ENCODE measurements at regions of chr1 and their contacts with region 1.

Region 1: DNA sequence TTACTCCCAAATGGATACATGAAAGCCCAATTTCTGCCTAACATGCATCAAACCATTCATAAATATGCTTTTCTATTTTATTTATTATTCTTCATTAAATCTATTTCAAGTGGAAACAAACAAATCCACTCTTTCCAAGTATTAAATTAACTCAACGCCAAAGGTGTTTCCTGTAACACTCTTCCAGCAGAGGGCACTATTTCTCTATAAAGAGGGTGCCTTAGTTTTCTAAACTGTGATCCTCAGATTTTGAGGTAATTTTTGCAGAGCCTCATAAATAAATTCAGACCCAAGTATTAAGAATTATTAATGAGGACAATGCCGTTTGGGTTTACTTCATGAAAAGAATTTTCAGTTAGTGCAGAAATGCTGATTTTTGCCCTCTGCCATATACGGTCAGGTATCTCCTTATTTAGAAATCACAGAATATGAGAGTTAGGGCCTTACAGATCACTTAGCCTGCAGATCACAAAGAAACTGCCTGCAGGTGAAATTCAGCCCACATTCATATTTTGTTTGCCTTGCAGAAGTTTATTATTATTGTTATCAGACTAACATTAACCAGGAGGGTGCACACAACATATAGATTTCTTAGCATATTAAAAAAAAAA is 40.1 kb upstream of the MYSM1 start:
- DNase-seq: no peak
- ATAC-seq: peak in 1 of 2 donors; percentile 61
- H3K4me3 ChIP-seq: no peak overlapping the region
- H3K27ac ChIP-seq: no peak overlapping the region
- H3K4me1 ChIP-seq: no peaks in the 10 kb centered on the region
- H3K27me3 ChIP-seq: no peaks in the 10 kb centered on the region

Region 2: GRCh38 chr1:58584082-58584895 is 155.7 kb before region 1 on chr1:
- intact Hi-C with region 1: no loop called
- DNase-seq: peak; percentile 73 to 78 (median 76)
- ATAC-seq: peak; percentile 82 to 93
- H3K4me3 ChIP-seq: no peak overlapping the region
- H3K27ac ChIP-seq: no peak overlapping the region
- H3K4me1 ChIP-seq: peaks cover 4% of the 10 kb centered on the region
- H3K27me3 ChIP-seq: no peaks in the 10 kb centered on the region

Region 3: GRCh38 chr1:58773406-58773840 is 33.5 kb after region 1 on chr1:
- intact Hi-C with region 1: loop called in 1 of 4 experiments (anchors 2 kb)
- DNase-seq: peak; percentile 69 to 77 (median 73)
- ATAC-seq: peak; percentile 93 to 94
- H3K4me3 ChIP-seq: no peak overlapping the region
- H3K27ac ChIP-seq: no peak overlapping the region
- H3K4me1 ChIP-seq: peaks cover 2% of the 10 kb centered on the region
- H3K27me3 ChIP-seq: no peaks in the 10 kb centered on the region

Region 4: GRCh38 chr1:59699227-59699847 is 959.4 kb after region 1 on chr1:
- intact Hi-C with region 1: loop called in 2 of 4 experiments (anchors 5 to 10 kb)
- DNase-seq: no peak
- ATAC-seq: peak in 1 of 2 donors; percentile 44
- H3K4me3 ChIP-seq: no peak overlapping the region
- H3K27ac ChIP-seq: no peak overlapping the region
- H3K4me1 ChIP-seq: peaks cover 11% of the 10 kb centered on the region
- H3K27me3 ChIP-seq: no peaks in the 10 kb centered on the region

Region 5: GRCh38 chr1:59707178-59707791 is 967.3 kb after region 1 on chr1:
- intact Hi-C with region 1: loop called in 1 of 4 experiments (anchors 10 kb)
- DNase-seq: peak; percentile 66 to 81 (median 69)
- ATAC-seq: peak; percentile 91 to 93
- H3K4me3 ChIP-seq: no peak overlapping the region
- H3K27ac ChIP-seq: peak overlapping the region; percentile 69
- H3K4me1 ChIP-seq: peaks cover 13% of the 10 kb centered on the region
- H3K27me3 ChIP-seq: no peaks in the 10 kb centered on the region

Region 6: DNA sequence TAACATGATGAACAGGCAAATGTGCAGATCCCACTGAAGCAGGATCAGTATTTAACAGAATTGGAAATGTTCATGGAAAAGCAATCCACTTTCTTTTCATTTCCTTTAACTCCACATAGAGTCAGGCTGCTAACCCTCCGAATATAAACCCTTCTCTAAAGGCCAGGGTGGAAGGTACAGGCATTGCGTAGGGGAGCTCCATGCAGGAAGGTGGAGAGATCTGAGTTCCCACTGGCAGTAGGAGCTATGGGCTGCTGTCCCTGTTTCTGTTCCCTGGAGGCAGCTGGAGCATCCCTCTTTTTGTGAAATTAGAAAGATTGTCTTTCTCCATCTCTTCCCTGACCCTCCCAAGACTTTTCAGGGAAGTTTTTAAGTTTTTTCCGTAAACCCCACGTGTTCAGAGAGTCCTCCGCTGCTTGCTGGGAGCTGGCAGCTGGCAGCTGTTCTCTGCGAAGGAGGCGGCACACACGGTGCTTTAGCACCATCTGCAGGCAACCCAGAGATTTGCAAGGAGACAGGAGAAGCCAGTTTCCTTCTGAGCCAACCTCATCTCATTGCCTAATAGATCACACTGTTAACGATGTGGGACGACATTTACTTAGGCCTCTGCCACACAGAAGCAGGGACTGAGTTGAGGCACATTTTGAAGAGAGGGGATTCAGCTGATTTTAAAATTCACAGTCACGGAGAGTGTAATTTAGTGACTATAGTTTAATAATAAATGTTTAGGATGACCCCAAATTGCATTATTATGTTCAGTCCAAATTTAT is 1019.4 kb after region 1 on chr1:
- intact Hi-C with region 1: loop called in 2 of 4 experiments (anchors 10 kb)
- DNase-seq: peak; percentile 82 to 92 (median 90)
- ATAC-seq: peak; percentile 95 to 96
- H3K4me3 ChIP-seq: peak overlapping the region; percentile 51
- H3K27ac ChIP-seq: peak overlapping the region; percentile 51
- H3K4me1 ChIP-seq: no peaks in the 10 kb centered on the region
- H3K27me3 ChIP-seq: no peaks in the 10 kb centered on the region